Activated CD4-positive, alpha-beta memory T cell treated with anti-CD3 and anti-CD28 coated beads for 36 hours (primary cell): ENCODE measurements at regions of chr2 and their contacts with region 1.

Region 1: GRCh38 chr2:207503234-207503633 is 26.5 kb upstream of the CREB1 start:
- DNase-seq: peak; percentile 35
- H3K4me3 Mint-ChIP-seq: no peak overlapping the region
- H3K27ac Mint-ChIP-seq: no peak overlapping the region
- H3K4me1 Mint-ChIP-seq: peaks cover 41% of the 10 kb centered on the region
- H3K27me3 Mint-ChIP-seq: no peaks in the 10 kb centered on the region

Region 2: DNA sequence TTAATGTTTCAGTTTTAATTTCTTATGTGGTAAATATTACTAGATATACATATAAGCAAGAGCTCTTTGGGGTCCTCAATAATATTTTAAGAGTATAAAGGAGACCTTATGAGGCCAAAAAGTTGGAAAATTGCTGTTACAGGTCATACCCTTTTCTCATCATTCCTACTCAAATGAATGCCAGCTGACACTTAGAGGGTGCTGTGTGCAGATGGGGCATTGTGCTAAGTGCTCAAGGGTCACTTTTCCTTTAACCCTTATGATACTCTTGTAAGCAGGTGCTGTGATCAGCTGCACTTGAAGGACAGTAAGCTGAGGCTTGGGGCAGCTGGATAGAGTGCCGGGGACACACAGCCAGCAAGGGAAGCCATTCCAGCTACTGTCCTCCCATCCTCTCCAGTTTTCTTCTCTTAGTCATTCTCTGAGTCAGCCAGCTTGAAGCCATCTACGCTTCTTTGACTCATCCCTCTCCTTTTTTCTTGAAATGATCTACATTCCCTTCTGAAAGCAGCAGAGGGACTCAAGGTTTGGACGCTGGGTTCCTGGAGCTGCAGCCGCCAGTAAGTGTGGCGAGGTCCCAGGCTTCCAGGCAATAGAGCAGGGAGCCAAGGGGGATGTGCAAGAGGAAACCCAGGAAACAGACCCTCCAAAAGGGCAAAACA is 15.5 kb before region 1 on chr2:
- CTCF ChIA-PET with region 1: no interaction called
- POLR2A ChIA-PET with region 1: no interaction called
- intact Hi-C with region 1: no loop called
- DNase-seq: no peak
- H3K4me3 Mint-ChIP-seq: no peak overlapping the region
- H3K27ac Mint-ChIP-seq: no peak overlapping the region
- H3K4me1 Mint-ChIP-seq: no peaks in the 10 kb centered on the region
- H3K27me3 Mint-ChIP-seq: no peaks in the 10 kb centered on the region

Region 3: GRCh38 chr2:207513551-207514257 is 10.5 kb after region 1 on chr2:
- CTCF ChIA-PET with region 1: interaction called, 3 read pairs
- POLR2A ChIA-PET with region 1: interaction called, 4 read pairs
- intact Hi-C with region 1: loop called (anchors 1 kb)
- DNase-seq: no peak
- H3K4me3 Mint-ChIP-seq: no peak overlapping the region
- H3K27ac Mint-ChIP-seq: peak overlapping the region; percentile 4
- H3K4me1 Mint-ChIP-seq: peaks cover 32% of the 10 kb centered on the region
- H3K27me3 Mint-ChIP-seq: no peaks in the 10 kb centered on the region

Region 4: GRCh38 chr2:207600231-207600630 is 97.0 kb after region 1 on chr2:
- CTCF ChIA-PET with region 1: no interaction called
- POLR2A ChIA-PET with region 1: no interaction called
- intact Hi-C with region 1: no loop called
- DNase-seq: no peak
- H3K4me3 Mint-ChIP-seq: no peak overlapping the region
- H3K27ac Mint-ChIP-seq: no peak overlapping the region
- H3K4me1 Mint-ChIP-seq: peaks cover 11% of the 10 kb centered on the region
- H3K27me3 Mint-ChIP-seq: no peaks in the 10 kb centered on the region